ENCODE measurements at regions of chr1 and their contacts with region 1.

Region 1: GRCh38 chr1:27102707-27103491 is 52.0 kb downstream of the SLC9A1 start:
- DNase-seq: peak; percentile 74 to 83 (median 80)
- ATAC-seq: peak; percentile 80
- H3K4me3 ChIP-seq: no peak overlapping the region
- H3K27ac ChIP-seq: no peak overlapping the region
- H3K4me1 ChIP-seq: no peaks in the 10 kb centered on the region
- H3K27me3 ChIP-seq: no peaks in the 10 kb centered on the region
- CTCF ChIP-seq: peak; percentile 91 to 96 (median 94)
- POLR2A ChIP-seq: no peak

Region 2: DNA sequence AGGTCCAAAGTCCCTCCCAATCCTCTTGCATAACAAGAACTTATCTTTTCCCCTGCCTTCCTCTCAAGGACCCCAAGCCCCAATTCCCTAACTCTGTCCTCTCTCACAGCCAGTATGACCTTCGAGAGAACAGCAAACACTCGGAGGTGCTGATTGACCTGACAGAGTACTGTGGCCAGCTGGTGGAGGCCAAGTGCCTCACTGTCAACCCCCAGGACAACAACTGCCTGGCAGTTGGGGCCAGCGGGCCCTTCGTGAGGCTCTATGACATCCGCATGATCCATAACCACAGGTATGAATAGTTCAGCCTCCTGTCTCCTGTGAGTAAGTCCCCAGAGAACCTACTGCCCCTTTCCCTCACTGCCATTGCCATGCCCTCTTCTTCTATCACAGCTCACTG is 189.2 kb after region 1 on chr1:
- intact Hi-C with region 1: loop called (anchors 5 kb)
- DNase-seq: peak in 2 of 4 donors; percentile 21 to 50
- ATAC-seq: peak; percentile 51
- H3K4me3 ChIP-seq: no peak overlapping the region
- H3K27ac ChIP-seq: peak overlapping the region in 1 of 4 donors; percentile 29
- H3K4me1 ChIP-seq: peaks cover 21% of the 10 kb centered on the region
- H3K27me3 ChIP-seq: no peaks in the 10 kb centered on the region
- CTCF ChIP-seq: no peak
- POLR2A ChIP-seq: no peak

Region 3: GRCh38 chr1:28933277-28933676 is 1830.4 kb after region 1 on chr1:
- intact Hi-C with region 1: no loop called
- DNase-seq: no peak
- ATAC-seq: no peak
- H3K4me3 ChIP-seq: no peak overlapping the region
- H3K27ac ChIP-seq: no peak overlapping the region
- H3K4me1 ChIP-seq: peaks cover 11% of the 10 kb centered on the region
- H3K27me3 ChIP-seq: no peaks in the 10 kb centered on the region
- CTCF ChIP-seq: no peak
- POLR2A ChIP-seq: no peak

Measured in body of pancreas (tissue), 4 donors.